HEK293 (cell line): ENCODE measurements at regions of chr1 and their contacts with region 1.

Region 1: GRCh38 chr1:223123011-223123610 is 19.9 kb downstream of the TLR5 start:
- H3K4me3 ChIP-seq: no peak overlapping the region
- H3K27ac ChIP-seq: no peak overlapping the region
- H3K4me1 ChIP-seq: no peaks in the 10 kb centered on the region
- CTCF ChIP-seq: no peak

Region 2: DNA sequence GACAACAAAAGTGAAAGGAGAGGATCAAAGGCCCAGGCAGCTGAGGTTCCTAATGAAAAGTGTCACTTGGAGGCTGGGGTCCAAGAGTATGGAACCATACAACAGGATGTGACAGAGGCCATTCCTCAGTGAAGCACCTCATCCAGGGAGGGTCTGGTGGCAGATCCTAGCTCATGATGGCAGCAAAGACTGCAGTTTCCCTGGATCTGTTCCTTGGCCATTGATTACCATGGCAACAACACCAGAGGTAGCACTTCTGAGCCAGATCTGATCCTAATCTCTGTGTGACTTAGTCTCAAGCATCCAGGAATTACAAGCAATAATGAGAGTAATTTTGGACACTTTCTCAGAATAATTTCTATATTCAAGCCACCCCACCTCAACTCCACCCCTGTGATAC is 373.2 kb before region 1 on chr1:
- CTCF ChIA-PET with region 1: interaction called, 12 read pairs
- POLR2A ChIA-PET with region 1: no interaction called
- H3K4me3 ChIP-seq: no peak overlapping the region
- H3K27ac ChIP-seq: no peak overlapping the region
- H3K4me1 ChIP-seq: no peaks in the 10 kb centered on the region
- CTCF ChIP-seq: peak; percentile 37; the same call in 1 of the 2 replicates

Region 3: DNA sequence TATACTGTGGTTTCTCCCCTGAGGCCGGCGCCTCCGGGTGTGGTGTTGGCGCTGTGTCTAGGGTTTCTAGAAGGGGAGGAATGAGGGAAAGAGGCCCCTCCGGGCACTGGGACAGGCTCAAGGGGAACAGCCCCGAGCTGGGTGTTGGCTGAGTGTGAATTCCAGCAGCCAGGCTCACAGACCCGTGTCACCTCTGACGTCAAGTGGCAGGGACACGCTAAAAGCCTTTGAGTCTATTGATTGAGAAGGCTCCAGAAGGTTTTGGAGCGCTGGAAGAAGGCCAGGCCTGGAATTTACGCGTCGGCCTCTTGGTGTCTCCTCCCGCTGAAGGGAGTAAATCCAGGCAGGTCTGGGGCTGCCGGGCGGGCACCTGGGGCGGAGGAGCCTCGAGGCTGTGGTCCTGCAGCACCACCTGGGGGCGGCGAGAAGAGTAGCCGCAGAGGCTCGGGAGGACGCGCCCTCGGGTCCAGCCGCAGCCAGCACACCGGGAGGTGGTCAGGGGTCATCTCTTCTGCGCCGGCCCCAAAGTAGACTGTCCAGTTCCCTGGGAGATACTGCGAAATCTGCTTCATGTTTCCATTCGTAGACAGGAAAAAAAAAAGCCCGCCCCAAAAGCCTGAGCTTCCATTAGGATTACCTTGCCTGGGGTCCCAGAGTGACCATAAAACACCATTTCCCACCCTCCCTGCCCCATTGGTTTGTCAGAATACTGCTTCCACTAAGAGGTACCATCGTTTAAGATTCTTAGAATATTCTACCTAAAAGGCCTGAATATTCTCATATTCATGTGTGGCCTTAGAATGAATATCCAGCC is 41.7 kb before region 1 on chr1:
- CTCF ChIA-PET with region 1: interaction called, 239 read pairs
- POLR2A ChIA-PET with region 1: no interaction called
- H3K4me3 ChIP-seq: no peak overlapping the region; the same call in 1 of the 2 replicates
- H3K27ac ChIP-seq: peak overlapping the region; percentile 66
- H3K4me1 ChIP-seq: no peaks in the 10 kb centered on the region
- CTCF ChIP-seq: peak; percentile 99

Region 4: DNA sequence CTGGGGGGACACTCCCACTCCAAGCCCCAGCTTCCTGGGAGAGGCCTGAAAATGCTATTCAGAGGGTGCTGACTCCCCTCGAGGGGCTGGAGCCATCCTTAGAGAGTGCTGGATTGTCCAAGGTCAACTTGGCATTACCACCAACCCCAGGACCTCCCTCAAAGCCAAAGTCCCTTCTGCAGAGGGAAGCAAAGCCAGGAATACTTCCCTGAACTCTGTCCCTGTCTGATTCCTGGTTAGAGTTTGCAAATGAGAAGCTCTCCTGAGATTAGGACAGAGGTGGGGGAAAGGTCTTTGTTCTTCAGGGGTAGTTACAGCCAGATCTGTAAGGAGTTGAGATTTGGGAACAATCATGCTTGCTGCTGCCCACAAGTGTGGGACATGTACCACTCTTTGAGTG is 25.4 kb before region 1 on chr1:
- CTCF ChIA-PET with region 1: interaction called, 81 read pairs
- POLR2A ChIA-PET with region 1: interaction called, 4 read pairs
- H3K4me3 ChIP-seq: no peak overlapping the region
- H3K27ac ChIP-seq: no peak overlapping the region
- H3K4me1 ChIP-seq: peaks cover 2% of the 10 kb centered on the region
- CTCF ChIP-seq: no peak

Region 5: DNA sequence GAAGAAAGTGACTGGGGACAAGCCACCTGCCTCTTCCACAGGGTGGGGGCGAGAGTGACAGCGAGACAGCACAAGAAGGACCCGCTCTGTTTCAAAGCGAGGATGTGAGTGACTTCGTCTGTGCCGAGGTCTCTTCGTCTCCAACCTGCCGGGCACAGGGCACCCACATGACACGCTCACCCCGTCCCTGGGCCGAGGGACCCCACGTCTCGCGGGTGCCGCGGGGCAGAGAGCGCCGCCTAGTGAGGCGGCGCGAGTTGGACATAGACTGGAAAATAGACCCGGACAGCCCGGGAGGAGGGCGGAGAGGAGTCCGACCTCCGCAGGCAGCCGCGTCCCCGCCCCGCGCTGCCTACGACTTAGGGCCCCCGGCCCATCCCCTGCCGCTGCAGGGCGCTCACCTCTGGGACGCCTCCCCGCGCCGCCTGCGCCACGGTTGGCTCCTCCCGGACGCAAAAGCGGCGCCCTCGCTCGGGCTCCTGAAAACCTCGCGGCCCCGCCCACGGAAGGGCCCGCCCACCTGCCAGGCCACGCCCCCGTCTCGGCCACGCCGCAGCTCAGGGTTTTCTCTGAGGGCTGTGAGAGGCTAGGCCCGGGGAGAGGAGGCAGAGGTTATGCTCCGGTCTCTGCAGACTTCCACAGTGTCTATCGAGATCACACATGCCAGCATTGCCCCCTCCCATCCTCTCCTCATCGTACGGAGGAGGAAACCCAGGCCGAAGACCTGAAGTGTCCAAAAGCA is 19.9 kb after region 1 on chr1 and contains the start of gene TLR5:
- CTCF ChIA-PET with region 1: interaction called, 147 read pairs
- POLR2A ChIA-PET with region 1: no interaction called
- H3K4me3 ChIP-seq: peak within 1 kb of the TSS; percentile 43
- H3K27ac ChIP-seq: peak within 1 kb of the TSS; percentile 3; the same call in 1 of the 2 replicates
- H3K4me1 ChIP-seq: no peaks in the 10 kb centered on the region
- CTCF ChIP-seq: peak; percentile 98

Region 6: GRCh38 chr1:223683586-223684487 is 560.7 kb after region 1 on chr1:
- CTCF ChIA-PET with region 1: interaction called, 34 read pairs
- POLR2A ChIA-PET with region 1: no interaction called
- H3K4me3 ChIP-seq: no peak overlapping the region
- H3K27ac ChIP-seq: no peak overlapping the region
- H3K4me1 ChIP-seq: no peaks in the 10 kb centered on the region
- CTCF ChIP-seq: peak; percentile 95